Sciatic nerve (tissue), 2 donors: ENCODE measurements at regions of chr12 and their contacts with region 1.

Region 1: DNA sequence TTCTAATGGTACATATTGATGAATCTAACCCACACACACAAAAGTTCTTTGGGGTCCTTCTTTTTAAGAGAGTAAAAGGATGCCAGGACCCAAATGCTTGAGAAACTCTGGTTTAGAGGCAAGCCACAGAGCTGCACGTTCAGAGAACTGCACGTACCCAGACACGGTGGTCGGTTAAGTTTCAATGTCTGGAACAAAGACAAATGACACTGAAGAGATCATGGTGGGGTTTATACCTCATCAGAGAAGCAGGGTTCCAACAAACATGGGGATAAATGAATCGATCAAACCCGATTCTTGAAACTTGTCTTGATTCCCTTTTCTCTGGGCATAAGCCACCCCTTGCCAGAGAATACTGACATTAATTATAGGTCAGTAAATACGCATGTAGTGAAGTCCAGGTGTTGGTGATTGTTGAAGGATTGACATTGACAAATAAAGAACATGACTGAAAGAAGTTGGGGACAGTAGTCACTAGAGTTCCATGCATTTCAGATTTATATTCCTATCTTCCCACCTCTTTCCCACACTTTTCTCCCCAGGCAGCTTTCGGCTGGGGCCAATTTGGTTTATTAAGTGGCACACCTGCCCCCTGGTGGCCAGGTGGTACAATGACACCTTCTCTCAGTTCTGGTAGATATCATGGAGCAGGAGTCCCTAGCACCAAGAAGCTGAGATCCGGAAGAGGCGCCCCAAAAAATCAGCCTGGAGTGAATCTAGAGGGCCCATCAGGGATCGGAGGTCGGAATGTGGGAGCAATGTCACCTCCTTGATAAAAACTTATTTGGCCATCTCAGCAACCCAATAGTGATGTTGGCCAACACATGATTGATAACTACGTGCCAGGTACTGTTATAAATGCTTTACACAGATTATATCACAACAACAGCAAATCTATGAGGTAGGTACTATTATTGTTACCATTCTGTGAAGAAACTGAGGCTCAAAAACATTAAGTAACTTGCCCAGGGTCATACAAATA is 17.8 kb upstream of the HDAC7 start:
- DNase-seq: peak; percentile 79
- ATAC-seq: peak; percentile 81

Region 2: DNA sequence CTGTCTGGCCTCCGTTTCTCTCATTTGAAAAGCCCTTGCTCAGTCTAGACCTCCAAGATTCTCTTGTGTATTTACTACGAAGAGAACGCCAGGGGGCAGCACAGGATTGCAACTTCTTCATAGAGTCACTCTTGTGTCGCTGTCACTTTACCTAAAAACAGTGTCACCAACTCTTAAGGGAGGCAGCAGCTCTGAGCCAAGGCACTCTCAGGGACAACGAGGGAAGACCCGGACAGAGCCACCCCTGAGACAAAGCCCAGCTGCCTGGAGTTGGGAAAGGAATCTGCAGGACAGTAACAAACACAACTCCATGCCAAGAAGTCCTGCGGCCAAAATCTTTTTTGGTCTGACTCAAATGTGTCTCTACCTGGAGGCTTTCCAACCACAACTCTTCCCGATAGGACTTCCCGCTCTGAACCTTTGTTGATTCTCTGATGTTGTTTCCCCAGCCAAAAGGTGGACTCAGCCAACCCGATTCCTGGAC is 122.0 kb before region 1 on chr12:
- intact Hi-C with region 1: loop called (anchors 5 kb)
- DNase-seq: peak; percentile 90
- ATAC-seq: peak; percentile 71

Region 3: GRCh38 chr12:47779301-47779942 is 58.1 kb before region 1 on chr12:
- intact Hi-C with region 1: loop called (anchors 5 kb)
- DNase-seq: peak; percentile 96
- ATAC-seq: peak; percentile 81

Region 4: GRCh38 chr12:47797441-47797840 is 40.0 kb before region 1 on chr12:
- intact Hi-C with region 1: loop called (anchors 5 kb)
- DNase-seq: peak; percentile 62
- ATAC-seq: no peak